ENCODE measurements at regions of chr14 and their contacts with region 1.

Region 1: DNA sequence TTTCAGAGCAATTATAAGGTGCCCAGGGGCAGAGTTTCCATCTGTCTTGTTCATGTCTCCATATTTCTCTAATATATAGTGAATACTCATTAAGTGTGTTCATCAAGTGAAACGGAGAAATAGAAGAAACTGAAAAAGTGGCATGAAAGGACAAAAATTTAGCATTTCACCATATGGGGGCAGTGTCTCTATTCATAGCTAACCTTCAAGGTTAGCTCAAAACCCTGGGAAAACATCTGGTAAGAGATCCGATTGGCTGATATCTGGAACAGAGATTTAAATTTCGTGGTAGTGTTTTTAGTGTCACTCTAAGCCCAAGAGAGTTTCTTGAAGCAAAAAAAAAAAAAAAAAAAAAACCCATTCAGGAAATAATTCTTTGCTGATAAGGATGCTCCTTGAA is 367.5 kb downstream of the DAD1 start:
- DNase-seq: no peak
- ATAC-seq: peak; percentile 58
- H3K4me3 ChIP-seq: no peak overlapping the region
- H3K27ac ChIP-seq: no peak overlapping the region
- H3K4me1 ChIP-seq: no peaks in the 10 kb centered on the region
- H3K27me3 ChIP-seq: no peaks in the 10 kb centered on the region; a peak in 2 of 4 replicates
- CTCF ChIP-seq: peak; percentile 31 to 49 (median 43); a peak in 4 of 6 replicates
- EP300 ChIP-seq: no peak
- POLR2A ChIP-seq: no peak
- RAD21 ChIP-seq: peak; percentile 25; the same call in 1 of the 2 replicates

Region 2: DNA sequence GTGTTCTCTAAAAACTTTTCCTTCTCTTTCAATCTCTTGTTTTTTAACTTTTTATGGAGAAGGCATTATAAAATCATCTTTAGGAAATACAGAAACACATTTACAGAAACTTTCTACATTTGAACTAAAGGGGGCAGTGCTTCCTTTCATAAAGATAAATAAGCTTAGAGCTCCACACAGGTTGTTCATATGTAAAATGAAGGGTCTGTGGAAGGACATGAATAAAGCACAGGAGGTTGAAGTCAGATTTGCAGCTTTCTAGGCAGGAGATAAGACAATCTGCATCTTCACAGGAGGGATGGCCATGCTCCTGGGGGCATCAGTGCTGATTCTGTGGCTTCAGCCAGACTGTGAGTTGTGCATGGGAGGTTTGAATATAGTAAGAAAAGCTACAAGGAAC is 58.5 kb before region 1 on chr14:
- CTCF ChIA-PET with region 1: interaction called, 18 read pairs
- POLR2A ChIA-PET with region 1: no interaction called
- RAD21 ChIA-PET with region 1: interaction called, 10 read pairs
- SMC1A ChIA-PET with region 1: interaction called, 5 read pairs
- in situ Hi-C with region 1: no loop called
- intact Hi-C with region 1: no loop called
- DNase-seq: no peak
- ATAC-seq: peak; percentile 64
- H3K4me3 ChIP-seq: no peak overlapping the region
- H3K27ac ChIP-seq: no peak overlapping the region
- H3K4me1 ChIP-seq: no peaks in the 10 kb centered on the region
- H3K27me3 ChIP-seq: peaks cover 2% of the 10 kb centered on the region in 2 experiments; a peak in 2 of 4 replicates
- CTCF ChIP-seq: peak in 2 of 3 experiments; percentile 3 to 28; a peak in 3 of 6 replicates
- EP300 ChIP-seq: no peak
- POLR2A ChIP-seq: no peak
- RAD21 ChIP-seq: peak; percentile 40

Region 3: DNA sequence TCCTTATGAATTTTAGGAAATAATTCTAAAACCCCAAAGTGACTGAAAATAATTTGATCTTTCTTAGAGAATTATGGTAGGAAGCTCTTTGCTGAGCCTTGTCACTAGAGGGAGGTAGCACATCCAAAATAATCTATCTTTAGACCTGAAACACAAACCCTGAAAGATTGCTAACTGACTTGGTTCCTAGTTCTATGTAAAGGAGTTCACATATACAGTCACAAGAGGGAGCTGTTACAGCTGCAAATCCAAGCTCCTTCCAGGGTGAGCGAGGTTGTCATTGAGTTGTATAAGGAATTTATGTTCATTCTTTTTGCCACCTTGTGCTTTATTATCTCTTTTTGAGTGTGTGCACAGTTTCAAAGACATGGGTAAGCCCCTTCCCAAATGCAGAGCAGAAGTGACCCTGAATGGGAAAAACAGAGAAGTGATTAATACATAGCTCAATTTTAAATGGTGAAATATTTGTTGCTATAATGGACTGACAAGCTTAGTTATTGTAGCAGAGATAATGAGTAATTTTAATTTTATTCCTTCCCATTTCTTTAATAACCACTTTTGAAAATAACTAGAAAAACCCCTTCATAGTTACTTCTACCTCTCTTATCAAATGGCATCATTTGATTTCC is 20.4 kb before region 1 on chr14:
- CTCF ChIA-PET with region 1: interaction called, 25 read pairs
- POLR2A ChIA-PET with region 1: no interaction called
- RAD21 ChIA-PET with region 1: interaction called, 3 read pairs
- SMC1A ChIA-PET with region 1: interaction called, 10 read pairs
- in situ Hi-C with region 1: no loop called
- intact Hi-C with region 1: no loop called
- DNase-seq: peak; percentile 3
- ATAC-seq: peak; percentile 93
- H3K4me3 ChIP-seq: no peak overlapping the region
- H3K27ac ChIP-seq: no peak overlapping the region
- H3K4me1 ChIP-seq: no peaks in the 10 kb centered on the region
- H3K27me3 ChIP-seq: no peaks in the 10 kb centered on the region; a peak in 1 of 4 replicates
- CTCF ChIP-seq: peak; percentile 64 to 72 (median 65); a peak in 5 of 6 replicates
- EP300 ChIP-seq: no peak
- POLR2A ChIP-seq: no peak
- RAD21 ChIP-seq: peak; percentile 64

Region 4: DNA sequence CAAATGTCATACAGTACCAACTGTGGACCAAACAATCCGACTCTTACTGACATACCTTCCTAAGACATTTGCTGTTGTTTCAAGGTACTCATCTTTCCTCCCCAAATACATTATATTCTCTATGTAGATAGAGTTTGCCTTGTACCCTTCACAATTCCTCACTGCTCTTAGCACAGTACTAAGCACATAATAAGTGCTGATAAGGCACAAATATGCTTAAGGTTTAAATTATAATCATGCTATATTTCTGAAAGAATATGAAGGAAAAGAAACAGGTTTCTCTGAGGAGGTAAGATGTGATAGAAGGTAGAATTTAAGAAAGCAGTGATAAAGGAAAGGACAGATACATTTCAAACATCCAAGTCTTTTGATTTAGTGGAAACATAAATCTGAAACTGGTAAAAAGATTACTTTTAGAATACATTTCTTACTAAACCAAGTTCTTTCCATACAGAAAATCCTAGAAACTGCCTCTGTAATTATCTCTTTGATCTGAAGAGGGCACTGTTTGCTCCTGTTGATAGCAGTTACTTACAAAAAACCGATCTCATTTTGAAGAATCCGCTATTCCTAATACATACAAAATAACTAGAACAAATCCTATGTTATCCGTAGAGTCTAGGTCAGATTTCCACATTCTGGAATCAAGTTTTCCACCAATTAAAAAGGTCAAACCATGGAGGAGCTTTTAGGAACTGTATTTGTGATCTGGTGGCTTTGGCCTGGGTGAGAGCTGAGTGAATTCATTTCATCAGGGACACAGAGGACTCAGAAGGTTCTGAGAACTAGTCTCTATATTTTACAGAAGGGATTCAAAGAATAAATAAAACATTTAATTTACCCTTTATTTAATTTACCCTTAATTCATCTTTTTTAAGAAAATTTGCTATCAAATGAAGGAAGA is 55.7 kb after region 1 on chr14:
- CTCF ChIA-PET with region 1: interaction called, 16 read pairs
- POLR2A ChIA-PET with region 1: no interaction called
- RAD21 ChIA-PET with region 1: interaction called, 6 read pairs
- SMC1A ChIA-PET with region 1: interaction called, 10 read pairs
- in situ Hi-C with region 1: no loop called
- intact Hi-C with region 1: no loop called
- DNase-seq: no peak
- ATAC-seq: 0 out of 3 replicates have a peak, but pooled peaks have one; percentile 31
- H3K4me3 ChIP-seq: no peak overlapping the region
- H3K27ac ChIP-seq: no peak overlapping the region
- H3K4me1 ChIP-seq: no peaks in the 10 kb centered on the region
- H3K27me3 ChIP-seq: peaks cover 0 to 5% of the 10 kb centered on the region in 2 experiments; a peak in 3 of 4 replicates
- CTCF ChIP-seq: peak; percentile 53 to 69 (median 56)
- EP300 ChIP-seq: no peak
- POLR2A ChIP-seq: no peak
- RAD21 ChIP-seq: peak; percentile 49

Region 5: DNA sequence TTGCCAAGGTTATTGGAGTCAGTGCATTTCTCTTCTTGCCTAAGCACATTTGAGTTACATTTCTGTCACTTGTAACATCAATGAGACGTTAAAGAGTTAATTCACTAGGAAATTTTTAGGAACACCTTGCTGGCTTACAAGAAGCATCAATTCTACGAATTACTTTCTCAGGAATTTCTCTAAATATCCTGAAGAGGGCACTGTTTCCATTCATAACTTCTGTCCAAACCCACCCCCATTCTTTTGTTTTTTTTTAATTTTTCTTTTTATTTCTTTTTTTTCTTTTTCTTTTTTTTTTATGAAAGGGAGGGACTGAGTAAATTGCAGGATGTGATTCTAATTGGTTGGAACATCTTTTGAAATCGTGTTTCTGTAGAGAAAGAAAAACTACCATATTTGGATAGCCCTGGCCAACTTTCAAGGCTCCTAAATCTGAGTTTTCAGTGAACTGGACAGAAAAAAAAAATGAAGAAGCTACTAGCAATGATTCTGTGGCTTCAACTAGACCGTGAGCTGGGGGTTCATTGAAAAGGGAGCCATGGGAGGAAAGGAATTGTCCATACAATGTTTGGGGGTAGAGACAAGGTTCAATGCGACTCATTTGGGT is 82.2 kb after region 1 on chr14:
- CTCF ChIA-PET with region 1: interaction called, 11 read pairs
- POLR2A ChIA-PET with region 1: no interaction called
- RAD21 ChIA-PET with region 1: interaction called, 5 read pairs
- SMC1A ChIA-PET with region 1: interaction called, 3 read pairs
- in situ Hi-C with region 1: no loop called
- intact Hi-C with region 1: no loop called
- DNase-seq: no peak
- ATAC-seq: no peak
- H3K4me3 ChIP-seq: no peak overlapping the region
- H3K27ac ChIP-seq: no peak overlapping the region
- H3K4me1 ChIP-seq: no peaks in the 10 kb centered on the region
- H3K27me3 ChIP-seq: 0 out of 4 replicates have a peak, but pooled peaks cover 0 to 5% of the 10 kb centered on the region in 2 experiments
- CTCF ChIP-seq: peak; percentile 39 to 48 (median 44); a peak in 4 of 6 replicates
- EP300 ChIP-seq: no peak
- POLR2A ChIP-seq: no peak
- RAD21 ChIP-seq: peak; percentile 61

Region 6: GRCh38 chr14:22380571-22381407 is 159.3 kb after region 1 on chr14:
- CTCF ChIA-PET with region 1: interaction called, 24 read pairs
- POLR2A ChIA-PET with region 1: no interaction called
- RAD21 ChIA-PET with region 1: interaction called, 13 read pairs
- SMC1A ChIA-PET with region 1: interaction called, 11 read pairs
- in situ Hi-C with region 1: no loop called
- intact Hi-C with region 1: loop called (anchors 5 kb)
- DNase-seq: no peak
- ATAC-seq: no peak
- H3K4me3 ChIP-seq: no peak overlapping the region
- H3K27ac ChIP-seq: no peak overlapping the region
- H3K4me1 ChIP-seq: peaks cover 39% of the 10 kb centered on the region
- H3K27me3 ChIP-seq: no peaks in the 10 kb centered on the region
- CTCF ChIP-seq: no peak
- EP300 ChIP-seq: no peak
- POLR2A ChIP-seq: no peak
- RAD21 ChIP-seq: no peak

Measured in GM12878 (cell line).